Heart right ventricle (tissue), 16 donors: ENCODE measurements at regions of chr15 and their contacts with region 1.

Region 1: GRCh38 chr15:48536681-48537091 is 108.8 kb downstream of the FBN1 start:
- DNase-seq: peak in 1 of 2 donors; percentile 14
- ATAC-seq: peak; percentile 59 to 91 (median 86)
- H3K4me3 ChIP-seq: no peak overlapping the region
- H3K27ac ChIP-seq: peak overlapping the region in 8 of 10 donors; percentile 12 to 80 (median 58)
- H3K4me1 ChIP-seq: peaks cover 0 to 69% (median 33%) of the 10 kb centered on the region in 9 donors
- H3K27me3 ChIP-seq: no peaks in the 10 kb centered on the region
- CTCF ChIP-seq: no peak

Region 2: DNA sequence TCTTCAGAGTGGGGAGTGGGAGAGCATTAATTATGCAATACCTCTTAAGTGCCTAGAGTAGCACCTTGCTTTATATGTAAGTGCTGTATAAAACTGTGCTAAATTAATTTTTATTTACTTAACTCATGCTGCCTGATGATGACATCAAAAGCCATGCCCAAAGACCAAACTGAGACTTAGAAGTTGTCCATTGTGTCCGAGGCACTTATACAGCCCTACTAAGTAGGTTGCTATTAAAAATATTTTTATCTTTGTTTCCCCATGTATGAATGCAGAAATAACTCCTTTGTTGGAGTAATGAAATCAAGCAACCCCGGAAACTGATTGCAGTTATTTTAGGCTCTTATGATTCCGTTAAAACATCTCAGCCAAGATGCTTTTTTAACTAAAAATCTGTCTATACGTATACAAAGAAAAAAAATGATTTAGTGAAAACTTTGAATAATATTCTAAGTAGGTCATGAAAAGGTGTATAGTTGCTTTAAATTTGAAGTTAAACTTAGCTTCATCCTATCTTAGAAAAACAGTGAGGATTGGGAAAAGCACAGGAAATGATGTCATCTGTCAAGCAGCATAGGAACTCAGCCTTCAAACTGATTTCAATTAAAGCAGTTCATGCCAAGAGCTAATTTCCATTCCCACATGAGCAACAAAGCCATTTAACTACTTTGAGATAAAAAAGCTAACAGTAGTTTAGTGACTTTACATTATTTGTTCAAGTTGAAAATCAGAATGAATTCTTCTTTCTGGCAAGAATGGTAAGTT is 65.9 kb after region 1 on chr15:
- intact Hi-C with region 1: loop called in 1 of 10 experiments (anchors 5 kb)
- DNase-seq: peak in 1 of 2 donors; percentile 35
- ATAC-seq: peak in 7 of 8 donors; percentile 72 to 92 (median 81)
- H3K4me3 ChIP-seq: peak overlapping the region in 6 of 10 donors; percentile 14 to 40 (median 19)
- H3K27ac ChIP-seq: peak overlapping the region; percentile 27 to 84 (median 72)
- H3K4me1 ChIP-seq: peaks cover 4 to 44% (median 33%) of the 10 kb centered on the region in 9 donors
- H3K27me3 ChIP-seq: no peaks in the 10 kb centered on the region
- CTCF ChIP-seq: no peak

Region 3: DNA sequence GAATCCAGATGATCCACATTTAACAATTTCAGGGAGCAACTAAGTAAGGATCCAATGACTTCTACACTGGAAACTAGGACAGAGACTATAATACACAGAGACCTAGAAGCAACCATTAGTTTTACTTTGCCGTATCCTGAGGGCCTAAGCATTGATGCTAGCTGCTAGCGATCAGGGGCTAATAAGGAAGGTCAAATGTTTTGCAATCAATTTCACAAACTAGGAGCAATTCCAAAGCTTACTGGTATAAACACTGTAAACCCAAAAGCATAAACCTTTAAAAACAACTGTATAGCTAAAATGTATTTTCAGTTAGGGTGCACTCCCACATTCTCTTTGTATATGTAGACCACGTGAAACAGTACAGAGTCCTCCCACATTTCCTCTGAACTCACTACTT is 77.4 kb after region 1 on chr15:
- intact Hi-C with region 1: no loop called
- DNase-seq: no peak
- ATAC-seq: peak in 1 of 8 donors; percentile 29
- H3K4me3 ChIP-seq: no peak overlapping the region
- H3K27ac ChIP-seq: no peak overlapping the region
- H3K4me1 ChIP-seq: peaks cover 0 to 28% (median 14%) of the 10 kb centered on the region in 9 donors
- H3K27me3 ChIP-seq: no peaks in the 10 kb centered on the region
- CTCF ChIP-seq: no peak

Region 4: GRCh38 chr15:48631176-48631770 is 94.6 kb after region 1 on chr15:
- intact Hi-C with region 1: loop called in 1 of 10 experiments (anchors 10 kb)
- DNase-seq: no peak
- ATAC-seq: peak; percentile 40 to 75 (median 61)
- H3K4me3 ChIP-seq: no peak overlapping the region
- H3K27ac ChIP-seq: peak overlapping the region in 1 of 10 donors; percentile 29
- H3K4me1 ChIP-seq: peaks cover 0 to 56% (median 16%) of the 10 kb centered on the region in 9 donors
- H3K27me3 ChIP-seq: no peaks in the 10 kb centered on the region
- CTCF ChIP-seq: no peak